ENCODE measurements at regions of chr12 and their contacts with region 1.

Region 1: GRCh38 chr12:88580051-88580871 is at the start of gene KITLG:
- DNase-seq: peak; percentile 88
- H3K4me3 ChIP-seq: peak within 1 kb of the TSS; percentile 83
- H3K27ac ChIP-seq: peak within 1 kb of the TSS; percentile 88
- H3K4me1 ChIP-seq: no peaks in the 10 kb centered on the region
- H3K27me3 ChIP-seq: no peaks in the 10 kb centered on the region
- CTCF ChIP-seq: no peak
- total RNA-seq, gene KITLG: 32.8 to 37.1 TPM

Region 2: DNA sequence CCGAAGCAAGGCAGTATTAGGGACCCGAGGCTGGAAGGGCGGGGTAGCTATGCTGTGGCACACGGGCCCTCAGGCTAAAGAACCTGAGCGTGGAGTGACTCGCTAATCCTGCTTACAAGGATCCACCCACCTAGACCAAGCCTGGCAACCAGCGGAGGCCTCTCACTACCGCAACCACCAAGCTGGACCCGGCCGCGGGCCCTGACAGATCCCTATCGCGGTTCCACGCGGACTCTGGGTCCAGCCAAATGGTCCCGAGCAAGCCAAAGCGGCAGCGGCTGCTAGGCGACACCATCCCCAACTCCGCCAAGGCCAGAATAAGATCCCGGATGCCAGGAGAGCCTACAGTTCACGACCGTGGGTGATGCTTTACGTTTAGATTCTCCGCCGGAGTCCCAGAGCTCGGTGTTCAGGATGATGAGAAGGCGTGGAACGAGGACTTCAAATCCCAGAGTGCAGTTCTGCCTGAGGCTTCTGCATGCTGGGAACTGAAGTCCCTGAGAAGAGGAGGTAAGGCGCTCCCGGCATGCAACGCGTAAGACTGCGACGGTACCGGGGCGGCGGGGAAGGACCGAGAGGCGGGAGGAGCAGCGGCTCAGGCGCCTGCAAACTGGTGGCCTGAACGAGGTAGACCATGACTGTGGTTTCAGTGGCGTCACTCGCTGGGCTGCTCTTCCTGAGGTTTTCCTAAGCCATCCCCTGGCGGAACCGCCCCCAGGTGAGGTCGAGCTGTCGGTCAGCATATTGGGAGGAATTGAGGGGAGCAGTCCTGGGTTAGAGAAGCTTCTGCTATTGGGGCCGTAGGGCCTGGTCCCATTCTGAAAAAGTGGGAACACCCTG is 438.3 kb before region 1 on chr12 and contains the starts of genes CEP290 and TMTC3:
- intact Hi-C with region 1: loop called (anchors 10 kb)
- DNase-seq: peak; percentile 97
- H3K4me3 ChIP-seq: peak within 1 kb of the TSS; percentile 61
- H3K27ac ChIP-seq: peak within 1 kb of the TSS; percentile 65
- H3K4me1 ChIP-seq: no peaks in the 10 kb centered on the region
- H3K27me3 ChIP-seq: no peaks in the 10 kb centered on the region
- CTCF ChIP-seq: no peak
- total RNA-seq, gene CEP290: 6.8 to 6.9 TPM
- total RNA-seq, gene TMTC3: 14.6 to 16.8 TPM

Region 3: DNA sequence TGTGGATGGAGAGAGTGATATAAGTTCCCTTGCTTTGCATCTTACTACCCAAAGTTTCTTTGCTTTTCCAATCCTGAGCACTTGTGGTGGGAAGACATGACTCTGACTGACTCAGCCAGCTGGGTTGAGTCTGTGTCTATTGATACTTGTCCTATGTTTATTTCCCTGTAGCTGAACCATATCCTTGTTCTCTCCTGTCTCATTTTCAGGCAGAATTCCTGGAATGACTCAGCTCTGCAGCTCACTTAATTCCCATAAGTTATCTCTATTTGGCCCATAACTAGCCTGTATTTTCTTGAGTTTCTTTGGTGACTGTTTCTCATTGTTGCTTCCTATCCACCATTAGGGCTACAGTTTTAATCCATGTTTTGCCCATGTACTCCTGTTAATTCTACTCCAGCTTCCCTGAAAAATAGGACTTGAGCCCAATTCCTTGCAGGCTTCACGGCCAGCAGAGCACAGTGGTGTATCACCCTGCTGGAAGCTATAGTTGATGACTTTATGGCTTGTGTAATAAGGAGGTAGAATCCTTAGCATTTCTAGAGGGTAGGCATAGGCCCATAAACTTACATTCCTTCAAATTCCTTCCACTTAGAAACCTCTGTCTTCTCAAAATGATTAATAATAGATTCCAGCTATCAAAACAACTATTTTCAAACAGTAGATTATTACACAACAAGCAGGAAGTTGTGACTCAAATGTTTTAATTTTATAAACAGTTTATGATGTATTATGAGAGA is 255.0 kb before region 1 on chr12:
- intact Hi-C with region 1: loop called (anchors 10 kb)
- DNase-seq: no peak
- H3K4me3 ChIP-seq: no peak overlapping the region
- H3K27ac ChIP-seq: no peak overlapping the region
- H3K4me1 ChIP-seq: no peaks in the 10 kb centered on the region
- H3K27me3 ChIP-seq: no peaks in the 10 kb centered on the region
- CTCF ChIP-seq: no peak

Region 4: GRCh38 chr12:88650715-88651114 is 70.5 kb after region 1 on chr12:
- intact Hi-C with region 1: no loop called
- DNase-seq: no peak
- H3K4me3 ChIP-seq: no peak overlapping the region
- H3K27ac ChIP-seq: no peak overlapping the region
- H3K4me1 ChIP-seq: no peaks in the 10 kb centered on the region
- H3K27me3 ChIP-seq: no peaks in the 10 kb centered on the region
- CTCF ChIP-seq: no peak

Region 5: GRCh38 chr12:88693837-88694445 is 113.7 kb after region 1 on chr12:
- intact Hi-C with region 1: no loop called
- DNase-seq: no peak
- H3K4me3 ChIP-seq: no peak overlapping the region
- H3K27ac ChIP-seq: no peak overlapping the region
- H3K4me1 ChIP-seq: no peaks in the 10 kb centered on the region
- H3K27me3 ChIP-seq: no peaks in the 10 kb centered on the region
- CTCF ChIP-seq: no peak

Region 6: GRCh38 chr12:88993651-88994050 is 413.4 kb after region 1 on chr12:
- intact Hi-C with region 1: loop called (anchors 5 kb)
- DNase-seq: no peak
- H3K4me3 ChIP-seq: no peak overlapping the region
- H3K27ac ChIP-seq: no peak overlapping the region
- H3K4me1 ChIP-seq: no peaks in the 10 kb centered on the region
- H3K27me3 ChIP-seq: no peaks in the 10 kb centered on the region
- CTCF ChIP-seq: peak; percentile 54